ACHN (cell line): ENCODE measurements at regions of chr20 and their contacts with region 1.

Region 1: DNA sequence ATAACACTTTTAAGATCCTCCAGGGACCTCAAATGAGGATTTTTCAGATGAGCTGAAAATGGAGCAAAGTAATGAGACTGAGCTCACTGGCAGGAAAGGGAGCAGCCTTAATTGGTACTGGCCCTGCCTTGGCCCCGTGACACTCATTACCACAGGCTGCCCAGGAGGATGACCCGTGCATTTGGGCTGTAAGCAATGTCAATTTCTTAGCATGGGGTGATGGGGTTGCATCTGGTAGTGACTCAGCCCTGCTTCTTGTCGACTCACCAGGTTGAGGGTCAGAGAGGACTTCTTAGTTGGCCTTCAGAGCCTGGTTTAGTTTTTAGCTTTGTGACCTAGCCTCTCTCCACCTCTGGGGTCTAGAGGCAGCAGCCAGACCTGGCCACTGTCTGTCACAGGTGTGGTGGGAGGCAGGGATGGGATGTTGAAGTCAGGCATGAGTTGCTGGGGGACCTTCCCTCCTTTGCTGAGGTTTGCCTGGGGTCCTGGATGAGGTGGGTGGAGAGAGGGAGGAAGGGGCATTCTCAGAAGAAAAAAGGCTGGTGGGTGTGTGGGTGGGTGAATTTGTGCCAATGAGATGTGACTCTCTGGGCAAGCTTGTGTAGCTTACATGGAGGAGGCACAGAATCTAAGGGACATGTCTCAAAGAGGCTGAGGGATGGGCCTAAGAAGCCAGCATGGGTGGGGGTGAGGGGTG is 25.9 kb upstream of the EPB41L1 start:
- DNase-seq: peak; percentile 70

Region 2: GRCh38 chr20:35994994-35995453 is 133.6 kb before region 1 on chr20:
- in situ Hi-C with region 1: loop called (anchors 25 kb)
- DNase-seq: peak; percentile 80